Activated CD4-positive, alpha-beta T cell treated with anti-CD3 and anti-CD28 coated beads, Interleukin-2, amount 10 ng/mL, durations not matched to agents 24 days and 14 days (primary cell): ENCODE measurements at regions of chr5 and their contacts with region 1.

Region 1: DNA sequence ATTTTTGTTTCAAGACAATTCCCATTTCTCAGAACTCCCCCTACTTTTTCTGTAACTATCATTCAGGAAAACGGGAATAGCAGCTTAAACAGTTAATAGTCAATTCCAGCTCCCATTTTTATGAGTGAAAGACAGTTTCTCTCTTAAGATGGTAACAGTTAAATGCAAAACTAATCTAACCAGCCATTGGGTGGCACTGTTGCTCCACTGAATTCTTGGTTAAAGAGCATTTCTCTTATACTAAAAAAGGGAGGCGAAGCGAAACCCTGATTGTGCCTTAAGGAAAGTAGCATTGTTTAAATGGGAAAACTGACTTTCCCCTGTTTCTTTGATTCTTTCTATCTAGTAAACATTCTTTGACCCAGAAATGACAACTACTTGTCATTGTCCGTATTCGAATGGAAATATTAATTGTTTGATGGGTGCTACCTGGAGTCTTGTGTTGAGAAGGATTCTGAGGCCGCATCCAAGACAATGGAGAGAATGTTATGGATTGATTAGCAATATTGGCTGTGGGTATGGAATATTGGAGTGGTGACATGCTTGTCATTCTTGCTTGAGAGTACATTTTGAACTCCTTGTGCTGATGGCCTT is 507.8 kb downstream of the MAT2B start:
- DNase-seq: peak; percentile 79
- H3K4me3 Mint-ChIP-seq: no peak overlapping the region
- H3K27ac Mint-ChIP-seq: no peak overlapping the region
- H3K4me1 Mint-ChIP-seq: no peaks in the 10 kb centered on the region
- H3K27me3 Mint-ChIP-seq: no peaks in the 10 kb centered on the region

Region 2: DNA sequence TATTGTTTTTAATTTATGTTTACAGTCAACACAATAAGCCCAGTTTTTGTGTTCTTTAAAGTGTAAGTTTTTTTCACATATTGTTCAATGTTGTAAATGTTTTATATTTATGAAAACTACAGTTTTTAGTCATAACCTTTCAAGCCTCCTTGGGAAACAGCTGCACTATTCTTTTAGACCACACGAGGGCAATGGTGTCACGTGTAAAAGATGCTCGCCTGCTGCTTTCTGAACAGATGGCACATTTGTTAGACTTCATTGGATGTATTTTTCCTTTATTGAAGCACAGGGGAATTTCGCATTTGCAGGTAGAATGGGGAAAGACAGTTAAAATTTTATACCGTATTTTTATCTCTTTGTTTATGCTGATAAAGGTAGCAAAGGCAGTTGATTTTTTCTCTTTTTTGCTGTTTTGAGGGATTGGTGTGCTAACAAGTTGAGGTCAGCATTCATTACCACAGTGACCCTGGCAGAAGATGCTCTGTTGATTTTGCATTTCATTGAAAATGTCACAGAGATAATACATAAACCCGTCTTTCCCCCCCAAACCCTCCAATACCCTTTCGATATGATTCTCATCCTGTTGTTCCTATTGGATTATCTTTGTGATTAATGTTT is 448.7 kb before region 1 on chr5:
- intact Hi-C with region 1: loop called (anchors 5 kb)
- DNase-seq: peak; percentile 90
- H3K4me3 Mint-ChIP-seq: no peak overlapping the region
- H3K27ac Mint-ChIP-seq: no peak overlapping the region
- H3K4me1 Mint-ChIP-seq: peaks cover 20% of the 10 kb centered on the region
- H3K27me3 Mint-ChIP-seq: peaks cover 64% of the 10 kb centered on the region

Region 3: GRCh38 chr5:164048359-164048926 is 35.3 kb after region 1 on chr5:
- intact Hi-C with region 1: no loop called
- DNase-seq: no peak
- H3K4me3 Mint-ChIP-seq: no peak overlapping the region
- H3K27ac Mint-ChIP-seq: no peak overlapping the region
- H3K4me1 Mint-ChIP-seq: no peaks in the 10 kb centered on the region
- H3K27me3 Mint-ChIP-seq: no peaks in the 10 kb centered on the region

Region 4: DNA sequence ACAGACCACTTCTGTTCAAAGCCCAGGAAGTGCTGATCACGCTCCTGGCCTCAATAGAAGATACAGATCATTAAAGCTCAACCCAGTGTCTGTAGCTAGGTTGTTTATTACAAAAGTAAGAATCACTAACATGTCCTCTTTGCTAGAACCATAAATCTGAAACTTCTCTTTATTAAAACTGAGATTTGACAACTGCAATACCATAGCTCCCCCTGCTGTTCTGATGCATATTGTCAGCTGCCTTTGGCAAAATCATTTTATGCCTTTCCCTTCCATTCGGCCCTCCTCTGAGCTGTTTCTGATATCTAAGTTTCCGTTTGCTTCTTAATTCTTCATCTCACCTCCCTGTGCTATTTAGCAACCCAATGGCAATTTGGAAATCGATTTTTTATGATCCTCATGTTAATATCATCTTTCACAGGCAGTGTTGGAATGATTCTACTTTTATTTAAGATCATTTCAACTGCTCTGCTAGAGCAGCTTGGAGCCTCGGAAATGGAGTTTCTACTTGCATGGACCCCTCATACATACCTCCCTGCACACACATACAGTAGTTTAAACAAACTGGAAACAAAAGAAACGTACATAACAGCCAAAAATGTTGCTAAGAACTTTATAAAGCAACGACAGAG is 491.1 kb after region 1 on chr5:
- intact Hi-C with region 1: loop called (anchors 1 kb)
- DNase-seq: peak; percentile 74
- H3K4me3 Mint-ChIP-seq: no peak overlapping the region
- H3K27ac Mint-ChIP-seq: no peak overlapping the region
- H3K4me1 Mint-ChIP-seq: no peaks in the 10 kb centered on the region
- H3K27me3 Mint-ChIP-seq: no peaks in the 10 kb centered on the region

Region 5: DNA sequence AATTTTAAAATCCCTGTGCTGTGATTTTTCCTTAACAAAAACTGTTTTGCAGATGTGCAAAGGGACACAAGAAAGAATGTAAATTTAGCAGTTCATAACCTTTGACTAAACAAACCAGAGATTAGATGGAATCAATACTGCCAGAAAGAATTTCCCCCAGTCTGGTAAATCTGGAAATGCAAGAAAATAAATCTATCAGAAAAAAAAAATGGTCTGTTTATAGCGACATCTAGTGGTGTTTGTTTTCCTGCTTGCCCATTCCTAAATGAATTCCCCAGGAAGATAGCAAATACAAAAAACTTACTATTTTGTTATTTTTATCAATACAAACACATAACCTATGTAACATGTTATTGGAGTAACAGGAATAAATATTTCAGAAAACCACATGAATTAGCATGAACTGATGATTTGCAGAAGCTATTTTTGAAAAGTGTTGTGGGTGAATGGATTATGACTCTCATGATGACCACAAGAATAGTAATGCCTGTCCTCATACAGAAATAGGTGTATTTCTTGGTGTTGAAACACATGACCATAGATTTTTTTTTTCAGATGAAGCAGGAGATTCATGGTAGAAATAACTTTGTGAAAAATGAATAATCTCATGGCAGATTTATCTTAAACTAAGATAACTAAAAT is 1196.0 kb after region 1 on chr5:
- intact Hi-C with region 1: loop called (anchors 5 kb)
- DNase-seq: no peak
- H3K4me3 Mint-ChIP-seq: no peak overlapping the region
- H3K27ac Mint-ChIP-seq: no peak overlapping the region
- H3K4me1 Mint-ChIP-seq: no peaks in the 10 kb centered on the region
- H3K27me3 Mint-ChIP-seq: no peaks in the 10 kb centered on the region